Panc1 (cell line): ENCODE measurements at regions of chr15 and their contacts with region 1.

Region 1: DNA sequence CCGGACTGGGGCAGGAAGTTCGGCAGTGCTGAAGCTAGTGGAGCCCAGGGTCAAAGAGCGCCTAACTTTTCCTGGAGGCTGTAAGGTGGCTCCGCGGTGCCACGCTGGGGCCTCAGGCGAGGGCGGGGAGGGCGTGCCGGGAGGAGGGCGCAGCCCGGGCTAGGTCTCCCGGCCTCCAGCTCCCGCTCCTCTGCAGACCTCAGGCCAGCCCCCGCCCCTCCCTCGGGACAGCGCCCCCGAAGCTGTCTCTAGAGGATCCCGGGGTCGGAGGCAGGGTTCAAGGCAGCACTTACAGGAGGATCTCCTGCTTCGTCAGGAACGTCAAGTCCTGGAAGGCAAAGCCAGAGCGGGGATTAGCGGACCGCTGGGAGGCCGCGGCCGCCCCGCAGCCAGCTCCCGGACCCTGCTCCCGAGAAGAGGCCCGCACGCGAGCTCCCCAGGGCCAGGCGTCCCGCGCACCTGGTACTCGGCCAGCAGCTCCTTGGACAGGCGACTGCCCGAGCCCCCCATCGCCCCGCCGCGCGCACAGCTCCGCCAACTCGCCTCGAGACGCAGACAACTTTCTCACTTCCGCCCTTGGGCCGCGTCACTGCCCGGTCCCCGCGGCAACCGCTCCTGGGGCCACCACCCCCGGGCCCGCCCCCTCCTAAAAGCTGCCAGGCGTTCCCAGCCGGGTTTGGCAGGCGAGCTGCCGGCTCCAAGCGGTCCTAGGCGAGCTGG is at the start of gene CIB1:
- DNase-seq: no peak
- ATAC-seq: peak; percentile 79
- H3K4me3 ChIP-seq: peak within 1 kb of the TSS; percentile 75 to 85
- H3K27ac ChIP-seq: peak within 1 kb of the TSS; percentile 99
- H3K4me1 ChIP-seq: peaks cover 43% of the 10 kb centered on the region
- H3K27me3 ChIP-seq: no peaks in the 10 kb centered on the region
- CTCF ChIP-seq: no peak
- total RNA-seq, gene CIB1: 193 TPM

Region 2: DNA sequence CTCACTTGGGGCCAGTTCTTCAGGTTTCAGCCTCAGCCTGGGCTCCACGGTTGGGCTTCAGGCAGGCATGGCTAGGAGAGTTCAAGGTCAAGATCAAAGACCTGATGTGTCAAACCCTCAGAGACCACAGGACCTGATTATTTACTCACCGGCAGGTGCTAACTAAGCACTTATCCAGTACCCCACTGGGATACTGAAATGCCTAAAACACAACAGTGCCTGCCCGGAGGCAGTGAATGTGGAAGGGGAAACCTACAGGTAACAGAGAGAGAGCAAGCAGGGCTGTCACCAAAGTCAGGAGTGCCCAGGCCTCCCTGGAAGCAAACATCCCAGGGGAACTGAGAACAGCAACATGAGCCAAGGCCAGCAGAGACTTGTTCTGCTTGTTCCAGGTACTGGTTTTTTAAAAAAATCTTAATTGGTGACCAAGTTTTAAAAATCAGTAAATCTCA is 138.0 kb before region 1 on chr15:
- CTCF ChIA-PET with region 1: no interaction called
- POLR2A ChIA-PET with region 1: no interaction called
- in situ Hi-C with region 1: no loop called
- intact Hi-C with region 1: no loop called
- DNase-seq: no peak
- ATAC-seq: no peak
- H3K4me3 ChIP-seq: no peak overlapping the region
- H3K27ac ChIP-seq: 0 out of 2 replicates have a peak overlapping the region, but pooled peaks have one; percentile 53
- H3K4me1 ChIP-seq: peaks cover 48% of the 10 kb centered on the region
- H3K27me3 ChIP-seq: no peaks in the 10 kb centered on the region
- CTCF ChIP-seq: no peak

Region 3: GRCh38 chr15:90265271-90266060 is 31.9 kb after region 1 on chr15 and contains the start of gene NGRN:
- CTCF ChIA-PET with region 1: no interaction called
- POLR2A ChIA-PET with region 1: interaction called, 10 read pairs
- in situ Hi-C with region 1: no loop called
- intact Hi-C with region 1: no loop called
- DNase-seq: peak; percentile 75
- ATAC-seq: peak; percentile 97
- H3K4me3 ChIP-seq: peak within 1 kb of the TSS; percentile 78 to 81
- H3K27ac ChIP-seq: peak within 1 kb of the TSS; percentile 91
- H3K4me1 ChIP-seq: peaks cover 26% of the 10 kb centered on the region
- H3K27me3 ChIP-seq: no peaks in the 10 kb centered on the region
- CTCF ChIP-seq: no peak
- total RNA-seq, gene NGRN: 137 TPM